CD8-positive, alpha-beta T cell (primary cell): ENCODE measurements at regions of chr1 and their contacts with region 1.

Region 1: GRCh38 chr1:229408458-229409037 is 25.3 kb downstream of the ACTA1 start:
- DNase-seq: no peak
- ATAC-seq: no peak
- H3K4me3 ChIP-seq: no peak overlapping the region
- H3K4me3 Mint-ChIP-seq: no peak overlapping the region
- H3K27ac ChIP-seq: no peak overlapping the region
- H3K27ac Mint-ChIP-seq: no peak overlapping the region
- H3K4me1 ChIP-seq: peaks cover 16% of the 10 kb centered on the region
- H3K4me1 Mint-ChIP-seq: peaks cover 19% of the 10 kb centered on the region
- H3K27me3 ChIP-seq: peaks cover 5 to 7% of the 10 kb centered on the region in 2 experiments
- H3K27me3 Mint-ChIP-seq: peaks cover 66% of the 10 kb centered on the region
- CTCF ChIP-seq: no peak

Region 2: GRCh38 chr1:228785366-228786330 is 622.9 kb before region 1 on chr1:
- CTCF ChIA-PET with region 1: no interaction called
- POLR2A ChIA-PET with region 1: no interaction called
- intact Hi-C with region 1: loop called in 1 of 2 experiments (anchors 5 kb)
- DNase-seq: no peak
- ATAC-seq: no peak
- H3K4me3 ChIP-seq: no peak overlapping the region
- H3K4me3 Mint-ChIP-seq: no peak overlapping the region
- H3K27ac ChIP-seq: no peak overlapping the region
- H3K27ac Mint-ChIP-seq: no peak overlapping the region
- H3K4me1 ChIP-seq: peaks cover 6% of the 10 kb centered on the region
- H3K4me1 Mint-ChIP-seq: peaks cover 6% of the 10 kb centered on the region
- H3K27me3 ChIP-seq: peaks cover 0 to 6% of the 10 kb centered on the region in 2 experiments
- H3K27me3 Mint-ChIP-seq: no peaks in the 10 kb centered on the region
- CTCF ChIP-seq: no peak